ENCODE measurements at regions of chr1 and their contacts with region 1.

Region 1: GRCh38 chr1:156728597-156729462 is at the start of gene ISG20L2:
- DNase-seq: peak; percentile 98
- ATAC-seq: peak; percentile 78
- H3K4me3 ChIP-seq: peak within 1 kb of the TSS; percentile 98
- H3K27ac ChIP-seq: peak within 1 kb of the TSS; percentile 67
- H3K4me1 ChIP-seq: peaks cover 27% of the 10 kb centered on the region
- H3K27me3 ChIP-seq: no peaks in the 10 kb centered on the region
- CTCF ChIP-seq: no peak
- total RNA-seq, gene ISG20L2: 39.2 and 51.7 TPM in 2 replicates

Region 2: DNA sequence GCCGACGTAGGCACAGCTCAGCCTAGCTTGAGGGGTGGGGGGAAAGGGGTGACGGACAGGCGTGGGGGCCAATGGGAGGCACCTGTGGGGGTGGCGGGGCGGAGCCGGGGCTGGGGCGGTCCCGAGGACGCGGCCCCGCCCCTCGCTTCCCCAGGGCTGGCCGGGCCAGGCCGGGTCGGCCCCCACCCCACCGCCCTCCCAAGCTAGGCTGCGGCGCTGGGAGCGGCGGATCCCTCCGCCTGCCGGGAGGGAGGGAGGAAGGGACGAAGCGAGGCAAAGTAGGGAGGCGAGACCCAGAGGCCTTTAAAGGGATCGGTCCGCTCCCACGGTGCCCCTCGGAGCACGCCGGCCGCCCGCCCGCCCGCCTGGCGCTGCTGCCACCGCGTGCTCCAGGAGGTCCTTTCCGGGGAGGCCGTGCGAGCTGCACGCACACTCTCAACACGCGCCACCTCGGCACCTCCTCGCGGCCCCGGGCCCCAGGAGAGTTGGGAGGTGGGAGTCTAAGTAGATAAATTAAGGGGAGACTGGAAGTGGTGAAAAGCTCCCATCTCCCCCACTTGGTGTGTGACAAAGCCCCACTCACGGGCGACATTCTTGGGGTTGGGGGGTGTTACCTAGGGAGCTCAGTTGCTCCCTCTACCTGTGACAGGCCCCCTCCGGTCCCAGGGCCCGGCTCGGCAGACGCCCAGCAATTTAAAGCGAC is 227.9 kb before region 1 on chr1:
- CTCF ChIA-PET with region 1: interaction called, 8 read pairs
- POLR2A ChIA-PET with region 1: interaction called, 14 read pairs
- intact Hi-C with region 1: no loop called
- DNase-seq: peak; percentile 97
- ATAC-seq: peak; percentile 60
- H3K4me3 ChIP-seq: peak overlapping the region; percentile 95
- H3K27ac ChIP-seq: peak overlapping the region; percentile 96
- H3K4me1 ChIP-seq: peaks cover 74% of the 10 kb centered on the region
- H3K27me3 ChIP-seq: no peaks in the 10 kb centered on the region
- CTCF ChIP-seq: peak; percentile 83

Region 3: DNA sequence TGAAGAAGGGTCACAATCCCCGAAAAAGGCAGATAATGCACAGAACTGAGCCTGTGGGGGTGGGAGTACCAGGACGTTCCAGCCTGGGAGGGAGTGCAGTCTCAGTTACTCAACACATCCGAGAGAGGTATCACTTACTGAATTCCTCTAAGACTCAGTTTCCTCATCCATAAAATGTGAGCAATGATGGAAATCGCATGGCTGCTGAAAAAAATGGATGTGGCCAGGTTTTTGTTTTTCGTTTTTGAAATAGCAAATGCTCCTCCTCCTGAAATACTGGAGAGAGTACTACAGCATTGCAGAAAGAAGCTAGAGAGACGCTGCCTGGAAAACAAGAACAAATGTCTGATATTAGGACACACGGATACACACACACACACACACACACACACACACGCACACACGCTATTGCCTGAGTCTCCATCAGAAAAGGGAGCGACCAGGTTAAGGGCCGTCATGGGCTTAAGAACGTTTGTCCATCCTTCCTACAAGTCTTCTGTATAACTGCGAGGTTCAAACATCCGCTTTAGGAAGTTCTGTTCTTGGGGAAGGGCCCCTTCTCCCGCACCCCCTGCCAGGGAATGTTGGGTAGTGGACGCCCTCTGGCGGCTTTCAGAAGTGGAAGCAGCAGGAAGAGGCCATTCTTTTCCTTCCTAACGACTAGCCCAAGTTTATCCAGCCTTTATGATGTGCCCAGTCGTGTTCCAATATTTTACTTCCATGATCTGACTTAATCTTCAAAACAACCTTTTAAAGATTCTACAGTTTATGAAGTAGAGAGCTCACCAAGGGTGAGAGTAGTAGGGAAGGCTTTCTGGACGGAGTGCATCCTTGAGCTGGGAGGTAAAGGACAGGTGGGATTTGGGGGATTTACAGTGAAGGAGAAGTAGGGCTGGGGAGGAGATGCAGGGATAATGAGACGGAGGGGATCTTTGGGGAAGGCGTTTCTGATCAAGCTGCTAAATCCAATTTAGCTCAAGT is 50.9 kb before region 1 on chr1:
- CTCF ChIA-PET with region 1: interaction called, 12 read pairs
- POLR2A ChIA-PET with region 1: interaction called, 3 read pairs
- intact Hi-C with region 1: no loop called
- DNase-seq: peak; percentile 75
- ATAC-seq: peak; percentile 53
- H3K4me3 ChIP-seq: peak overlapping the region; percentile 64
- H3K27ac ChIP-seq: no peak overlapping the region
- H3K4me1 ChIP-seq: peaks cover 28% of the 10 kb centered on the region
- H3K27me3 ChIP-seq: no peaks in the 10 kb centered on the region
- CTCF ChIP-seq: peak; percentile 99

Region 4: DNA sequence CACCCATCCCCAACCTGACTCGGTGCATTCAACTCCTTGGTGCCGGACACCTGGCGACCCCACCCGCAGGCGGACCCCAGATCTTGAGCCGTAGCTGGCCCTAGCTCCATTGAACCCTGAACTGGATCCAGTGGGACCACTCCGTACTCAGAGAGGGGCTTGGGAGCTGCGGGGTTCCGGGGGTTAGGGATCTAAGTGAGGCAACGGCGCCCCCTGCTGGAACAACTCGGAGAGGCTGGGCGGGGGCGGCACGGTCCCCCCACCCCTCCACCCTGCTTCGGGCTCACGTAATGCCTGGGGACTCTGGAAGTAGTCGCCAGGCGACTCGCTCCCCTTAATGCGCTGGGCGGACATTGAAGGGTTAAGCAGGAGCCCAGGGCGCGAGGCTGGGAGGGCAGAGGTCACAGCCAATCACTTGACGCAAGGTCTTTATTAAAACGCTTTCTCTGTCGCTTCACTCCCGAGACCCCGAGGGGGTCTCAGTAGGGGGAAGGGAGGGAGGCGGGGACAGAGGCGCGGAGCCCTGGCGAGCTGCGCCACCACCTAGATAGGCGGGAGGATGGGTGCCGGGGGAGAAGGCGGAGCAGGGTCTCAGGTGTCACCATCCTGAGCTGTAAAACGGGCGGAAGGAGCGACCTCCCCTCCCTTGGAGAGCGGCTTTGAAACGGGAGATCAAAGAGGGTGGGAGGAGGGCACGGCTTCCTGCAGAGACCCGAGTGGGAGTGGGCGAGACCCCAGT is 22.7 kb before region 1 on chr1:
- CTCF ChIA-PET with region 1: interaction called, 7 read pairs
- POLR2A ChIA-PET with region 1: interaction called, 4 read pairs
- intact Hi-C with region 1: loop called (anchors 1 kb)
- DNase-seq: peak; percentile 72
- ATAC-seq: peak; percentile 29
- H3K4me3 ChIP-seq: peak overlapping the region; percentile 71
- H3K27ac ChIP-seq: no peak overlapping the region
- H3K4me1 ChIP-seq: peaks cover 58% of the 10 kb centered on the region
- H3K27me3 ChIP-seq: no peaks in the 10 kb centered on the region
- CTCF ChIP-seq: peak; percentile 99

Region 5: GRCh38 chr1:156751758-156752757 is 23.2 kb after region 1 on chr1:
- CTCF ChIA-PET with region 1: interaction called, 9 read pairs
- POLR2A ChIA-PET with region 1: no interaction called
- intact Hi-C with region 1: loop called (anchors 1 kb)
- DNase-seq: peak; percentile 98
- ATAC-seq: peak; percentile 53
- H3K4me3 ChIP-seq: peak overlapping the region; percentile 86
- H3K27ac ChIP-seq: peak overlapping the region; percentile 60
- H3K4me1 ChIP-seq: peaks cover 41% of the 10 kb centered on the region
- H3K27me3 ChIP-seq: no peaks in the 10 kb centered on the region
- CTCF ChIP-seq: no peak

Region 6: GRCh38 chr1:156860113-156860627 is 131.3 kb after region 1 on chr1:
- CTCF ChIA-PET with region 1: interaction called, 26 read pairs
- POLR2A ChIA-PET with region 1: no interaction called
- intact Hi-C with region 1: loop called (anchors 1 kb)
- DNase-seq: peak; percentile 65
- ATAC-seq: peak; percentile 66
- H3K4me3 ChIP-seq: peak overlapping the region; percentile 63
- H3K27ac ChIP-seq: no peak overlapping the region
- H3K4me1 ChIP-seq: peaks cover 22% of the 10 kb centered on the region
- H3K27me3 ChIP-seq: peaks cover 45% of the 10 kb centered on the region
- CTCF ChIP-seq: peak; percentile 96